CD8-positive, alpha-beta T cell (primary cell): ENCODE measurements at regions of chr14 and their contacts with region 1.

Region 1: DNA sequence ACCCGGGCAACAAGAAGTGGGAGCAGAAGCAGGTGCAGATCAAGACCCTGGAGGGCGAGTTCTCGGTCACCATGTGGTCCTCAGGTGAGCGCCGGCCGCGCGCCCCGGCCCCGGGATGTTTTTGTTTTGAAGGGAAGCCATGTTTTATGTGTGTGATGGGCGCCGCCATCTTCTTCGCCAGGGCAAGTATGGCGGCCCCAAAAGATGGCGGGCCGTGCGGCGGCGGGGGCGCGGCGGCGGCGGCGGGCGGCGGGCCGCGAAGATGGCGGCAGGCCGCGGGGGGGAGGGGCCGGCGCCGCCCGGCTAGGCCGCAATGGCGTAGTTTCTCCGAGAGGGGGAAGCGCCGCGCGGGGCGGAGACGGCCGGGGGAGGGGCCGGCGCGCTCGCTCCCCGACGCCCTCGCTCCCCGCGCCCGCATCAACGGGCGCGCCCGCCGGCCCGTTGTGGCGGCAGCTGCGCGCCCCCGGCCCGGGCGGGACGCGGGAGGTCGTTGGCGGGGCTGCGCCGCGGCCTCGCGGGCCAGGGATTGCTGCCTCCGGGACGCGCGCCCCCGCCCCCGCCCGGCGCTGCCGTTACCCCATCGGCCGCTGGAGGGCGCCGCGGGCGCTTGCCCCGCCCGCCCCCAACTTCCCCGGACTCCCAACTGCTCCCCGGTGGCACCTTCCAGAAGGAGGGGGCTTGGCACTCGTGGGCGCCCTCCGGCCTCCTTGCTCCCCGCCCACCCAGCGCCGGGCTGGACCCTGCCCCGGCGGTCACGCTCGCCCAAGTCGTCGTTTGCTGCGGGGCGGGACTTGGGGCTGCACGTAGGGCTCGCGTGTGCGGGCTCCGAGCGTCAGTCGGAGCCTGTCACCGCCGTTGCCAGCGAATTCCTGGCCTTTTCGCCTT is 1.1 kb downstream of the YY1 start:
- DNase-seq: peak; percentile 68 to 92 (median 84)
- ATAC-seq: peak; percentile 36
- H3K4me3 ChIP-seq: peak overlapping the region; percentile 66 to 77
- H3K4me3 Mint-ChIP-seq: peak overlapping the region; percentile 90
- H3K27ac ChIP-seq: peak overlapping the region; percentile 56 to 85
- H3K27ac Mint-ChIP-seq: peak overlapping the region; percentile 94
- H3K4me1 ChIP-seq: peaks cover 56% of the 10 kb centered on the region
- H3K4me1 Mint-ChIP-seq: peaks cover 59% of the 10 kb centered on the region
- H3K27me3 ChIP-seq: no peaks in the 10 kb centered on the region
- H3K27me3 Mint-ChIP-seq: no peaks in the 10 kb centered on the region
- CTCF ChIP-seq: peak; percentile 54

Region 2: GRCh38 chr14:99480917-99481744 is 759.0 kb before region 1 on chr14 and contains the start of gene CCNK:
- CTCF ChIA-PET with region 1: no interaction called
- POLR2A ChIA-PET with region 1: no interaction called
- intact Hi-C with region 1: loop called in 1 of 2 experiments (anchors 2 kb)
- DNase-seq: peak; percentile 100
- ATAC-seq: peak; percentile 87
- H3K4me3 ChIP-seq: peak within 1 kb of the TSS; percentile 97 to 99
- H3K4me3 Mint-ChIP-seq: peak within 1 kb of the TSS; percentile 99
- H3K27ac ChIP-seq: peak within 1 kb of the TSS; percentile 95 to 96
- H3K27ac Mint-ChIP-seq: peak within 1 kb of the TSS; percentile 99
- H3K4me1 ChIP-seq: peaks cover 38% of the 10 kb centered on the region
- H3K4me1 Mint-ChIP-seq: peaks cover 60% of the 10 kb centered on the region
- H3K27me3 ChIP-seq: no peaks in the 10 kb centered on the region
- H3K27me3 Mint-ChIP-seq: no peaks in the 10 kb centered on the region
- CTCF ChIP-seq: no peak
- total RNA-seq, gene CCNK: 171 to 177 TPM

Region 3: DNA sequence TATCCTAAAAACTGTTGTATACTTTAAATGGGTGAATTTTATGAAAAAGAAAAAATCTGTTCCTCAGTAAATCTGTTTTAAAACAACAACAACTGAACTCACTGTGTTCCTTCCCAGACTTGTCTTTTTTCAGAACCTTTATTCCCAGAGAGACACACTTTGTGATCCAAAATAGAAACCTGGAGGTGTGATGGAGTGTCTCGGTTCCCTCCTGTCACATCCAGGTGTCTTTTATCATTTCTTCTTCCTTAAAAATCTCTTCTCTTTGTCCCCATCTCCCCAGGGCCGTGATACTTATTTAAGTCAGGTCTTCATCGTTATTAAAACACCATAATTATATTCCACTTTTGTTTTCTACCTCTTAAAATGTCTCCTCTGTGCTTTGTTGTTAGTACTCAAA is 251.1 kb before region 1 on chr14:
- CTCF ChIA-PET with region 1: no interaction called
- POLR2A ChIA-PET with region 1: no interaction called
- intact Hi-C with region 1: no loop called
- DNase-seq: no peak
- ATAC-seq: no peak
- H3K4me3 ChIP-seq: no peak overlapping the region
- H3K4me3 Mint-ChIP-seq: no peak overlapping the region
- H3K27ac ChIP-seq: no peak overlapping the region
- H3K27ac Mint-ChIP-seq: no peak overlapping the region
- H3K4me1 ChIP-seq: no peaks in the 10 kb centered on the region
- H3K4me1 Mint-ChIP-seq: no peaks in the 10 kb centered on the region
- H3K27me3 ChIP-seq: no peaks in the 10 kb centered on the region
- H3K27me3 Mint-ChIP-seq: no peaks in the 10 kb centered on the region
- CTCF ChIP-seq: no peak

Region 4: DNA sequence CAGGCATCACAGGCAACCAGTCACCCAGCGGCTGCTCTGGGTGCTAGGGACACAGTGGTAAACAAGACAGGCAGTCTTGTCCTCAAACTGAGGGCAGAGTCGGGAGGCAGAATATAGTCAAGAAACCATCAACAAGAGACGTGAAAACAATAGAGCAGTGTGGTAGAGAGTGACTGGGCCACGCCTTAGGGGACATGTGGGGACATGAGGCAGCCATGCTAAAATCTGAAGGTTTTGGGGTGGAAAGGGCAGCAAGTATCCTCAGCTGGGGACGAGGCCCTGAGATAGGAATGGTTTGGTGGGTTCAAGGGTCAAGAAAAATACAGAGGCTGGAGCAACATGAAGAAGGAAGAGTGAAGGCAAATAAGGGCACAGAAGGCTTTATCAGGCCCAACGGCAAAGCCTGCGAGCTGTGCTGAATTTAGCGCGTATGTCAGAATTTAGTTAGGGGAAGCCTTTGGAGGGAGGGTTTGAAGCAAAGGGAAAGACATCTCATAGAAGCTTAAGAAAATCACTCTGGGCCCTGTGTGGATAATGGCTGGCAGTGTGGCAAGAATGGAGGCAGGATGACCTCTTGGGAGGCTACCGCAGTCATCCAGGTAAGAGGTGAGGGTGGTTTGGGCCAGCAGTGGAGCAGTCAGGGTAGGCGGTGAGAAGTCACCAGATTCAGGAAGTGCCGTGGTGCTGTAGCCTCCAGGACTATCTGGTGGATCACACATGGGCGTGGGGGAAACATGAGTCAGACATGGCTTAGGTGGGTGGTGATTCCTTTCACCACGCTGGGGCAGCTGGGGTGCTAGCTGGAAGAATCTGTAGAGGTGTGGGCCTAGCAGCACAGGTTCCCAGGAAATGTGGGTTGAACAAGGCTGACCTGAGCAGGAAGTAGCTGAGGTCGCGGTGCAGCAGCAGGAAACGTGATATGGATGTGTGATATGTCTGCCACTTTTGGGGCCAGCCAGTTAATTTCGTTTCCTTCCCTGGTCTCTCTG is 171.8 kb before region 1 on chr14:
- CTCF ChIA-PET with region 1: interaction called, 3 read pairs
- POLR2A ChIA-PET with region 1: interaction called, 5 read pairs
- intact Hi-C with region 1: loop called (anchors 2 kb)
- DNase-seq: peak; percentile 70 to 98 (median 88)
- ATAC-seq: peak; percentile 50
- H3K4me3 ChIP-seq: peak overlapping the region; percentile 73 to 85
- H3K4me3 Mint-ChIP-seq: peak overlapping the region; percentile 100
- H3K27ac ChIP-seq: peak overlapping the region; percentile 83 to 87
- H3K27ac Mint-ChIP-seq: peak overlapping the region; percentile 99
- H3K4me1 ChIP-seq: peaks cover 59% of the 10 kb centered on the region
- H3K4me1 Mint-ChIP-seq: peaks cover 82% of the 10 kb centered on the region
- H3K27me3 ChIP-seq: no peaks in the 10 kb centered on the region
- H3K27me3 Mint-ChIP-seq: no peaks in the 10 kb centered on the region
- CTCF ChIP-seq: no peak

Region 5: DNA sequence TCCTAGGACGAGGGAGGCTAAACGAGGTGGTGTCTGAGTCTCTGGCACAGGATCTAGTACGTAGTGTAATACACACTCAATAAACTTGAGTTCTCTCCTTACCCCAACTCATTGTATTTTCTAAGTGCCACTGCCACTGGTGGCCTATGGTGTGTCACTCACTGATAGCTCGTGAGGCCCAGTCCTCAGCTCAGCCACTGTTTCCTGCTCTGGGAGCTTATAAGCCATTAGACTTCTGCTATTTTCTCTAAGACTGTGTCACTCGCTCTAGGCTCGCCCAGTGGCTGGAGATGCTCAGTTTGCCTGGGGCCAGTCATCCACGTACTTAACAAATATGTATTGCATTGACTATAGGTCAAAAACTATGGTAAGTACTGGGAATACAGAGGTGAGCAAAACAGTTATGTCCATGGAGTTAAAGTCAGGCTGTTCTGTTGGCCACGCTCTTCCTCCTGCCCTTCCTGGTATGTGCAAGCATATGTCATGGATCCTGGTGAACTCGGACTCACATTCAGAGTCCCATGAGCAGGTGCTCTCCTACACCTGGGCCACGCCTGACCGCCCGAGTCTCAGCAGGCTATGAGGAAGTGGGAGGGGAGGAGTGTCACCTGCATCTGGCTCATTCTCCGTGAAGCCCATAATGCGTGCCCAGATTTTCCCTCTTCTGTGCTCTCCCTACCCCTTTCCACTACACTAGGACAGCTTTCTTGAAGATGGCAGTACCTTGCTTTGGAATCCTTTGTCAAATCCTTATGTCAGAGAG is 122.3 kb before region 1 on chr14:
- CTCF ChIA-PET with region 1: no interaction called
- POLR2A ChIA-PET with region 1: no interaction called
- intact Hi-C with region 1: no loop called
- DNase-seq: peak in 1 of 9 experiments; percentile 11
- ATAC-seq: no peak
- H3K4me3 ChIP-seq: no peak overlapping the region
- H3K4me3 Mint-ChIP-seq: no peak overlapping the region
- H3K27ac ChIP-seq: no peak overlapping the region
- H3K27ac Mint-ChIP-seq: peak overlapping the region; percentile 77
- H3K4me1 ChIP-seq: peaks cover 18% of the 10 kb centered on the region
- H3K4me1 Mint-ChIP-seq: peaks cover 37% of the 10 kb centered on the region
- H3K27me3 ChIP-seq: no peaks in the 10 kb centered on the region
- H3K27me3 Mint-ChIP-seq: no peaks in the 10 kb centered on the region
- CTCF ChIP-seq: no peak

Region 6: DNA sequence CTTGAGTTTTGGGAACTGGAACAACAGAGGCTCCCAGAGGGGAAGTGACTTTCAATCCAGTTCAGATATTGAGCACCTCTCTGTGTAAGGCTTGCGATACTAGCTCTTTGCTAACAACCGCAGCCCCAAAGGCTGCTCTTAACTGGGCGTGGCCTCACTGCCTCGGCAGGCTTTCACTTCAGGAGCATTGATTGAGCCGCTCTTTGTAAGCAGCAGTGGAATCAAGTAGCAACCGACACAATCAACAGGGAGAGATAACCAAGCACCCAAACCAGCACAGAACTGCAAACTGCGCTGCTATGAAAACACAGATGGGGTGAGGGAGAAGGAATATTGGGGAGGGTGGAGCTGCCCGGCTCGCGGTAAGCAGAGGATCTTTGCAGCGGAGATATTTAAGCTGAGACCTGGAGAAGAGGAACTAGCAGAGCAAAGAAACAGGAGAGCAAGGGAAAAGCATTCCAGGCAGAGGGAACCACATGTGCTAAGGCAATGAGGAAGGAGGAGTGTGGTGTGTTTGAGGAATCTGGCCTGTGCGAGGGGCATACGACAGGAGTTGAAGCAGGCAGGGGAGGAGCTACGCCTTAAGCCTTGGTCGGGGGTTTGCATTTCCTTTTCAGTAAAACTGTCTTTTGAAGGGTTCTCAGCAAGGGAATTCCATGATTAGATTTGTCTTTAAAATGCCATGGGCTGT is 18.4 kb before region 1 on chr14:
- CTCF ChIA-PET with region 1: interaction called, 52 read pairs
- POLR2A ChIA-PET with region 1: interaction called, 81 read pairs
- intact Hi-C with region 1: loop called (anchors 1 kb)
- DNase-seq: peak; percentile 40 to 85 (median 74)
- ATAC-seq: peak; percentile 96
- H3K4me3 ChIP-seq: peak overlapping the region; percentile 68 to 95
- H3K4me3 Mint-ChIP-seq: no peak overlapping the region
- H3K27ac ChIP-seq: peak overlapping the region; percentile 76 to 77
- H3K27ac Mint-ChIP-seq: no peak overlapping the region
- H3K4me1 ChIP-seq: peaks cover 45% of the 10 kb centered on the region
- H3K4me1 Mint-ChIP-seq: peaks cover 7% of the 10 kb centered on the region
- H3K27me3 ChIP-seq: no peaks in the 10 kb centered on the region
- H3K27me3 Mint-ChIP-seq: no peaks in the 10 kb centered on the region
- CTCF ChIP-seq: no peak

Region 7: DNA sequence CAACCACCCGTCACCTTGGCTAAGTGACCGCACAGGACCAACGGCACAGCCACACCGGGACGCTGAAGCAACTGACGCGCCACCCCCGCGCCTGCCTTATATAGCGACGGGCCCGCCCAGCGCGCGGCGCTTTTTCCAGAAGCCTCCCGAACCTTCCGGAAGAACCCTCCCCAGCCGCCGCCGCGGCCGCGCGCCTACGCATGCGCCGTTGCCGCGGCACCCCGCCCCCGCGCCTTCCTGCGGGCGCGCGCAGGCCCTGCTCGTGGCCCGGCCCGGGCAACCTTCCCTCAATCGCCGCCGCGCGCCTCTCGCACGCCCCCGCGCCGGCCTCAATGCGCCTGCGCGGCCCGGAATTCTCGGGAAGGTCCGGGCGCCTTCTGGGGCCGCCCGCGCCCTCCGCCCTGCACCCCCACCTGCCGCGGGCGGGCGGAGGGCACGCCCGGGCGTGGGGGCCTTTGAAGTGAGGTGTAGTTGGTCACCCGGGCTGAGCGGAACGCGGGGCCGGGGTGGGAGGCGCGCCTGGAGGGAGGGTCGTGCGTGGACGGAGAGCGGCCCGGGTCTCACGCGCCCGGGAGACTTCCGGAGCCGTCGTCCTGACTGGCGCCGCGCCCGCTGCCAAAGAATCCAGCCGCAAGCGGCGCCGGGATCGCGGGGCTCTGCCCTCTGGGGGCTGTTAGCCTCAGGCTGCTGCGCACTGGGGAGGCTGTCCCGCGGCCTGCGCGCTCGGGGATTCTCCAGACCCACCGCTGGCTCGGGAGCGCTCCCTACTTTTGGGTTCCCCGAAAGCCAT is 1847.1 kb after region 1 on chr14 and contains the start of gene HSP90AA1:
- CTCF ChIA-PET with region 1: no interaction called
- POLR2A ChIA-PET with region 1: no interaction called
- intact Hi-C with region 1: loop called in 1 of 2 experiments (anchors 10 kb)
- DNase-seq: peak; percentile 88 to 98 (median 95)
- ATAC-seq: peak; percentile 74
- H3K4me3 ChIP-seq: peak within 1 kb of the TSS; percentile 75 to 78
- H3K4me3 Mint-ChIP-seq: peak within 1 kb of the TSS; percentile 97
- H3K27ac ChIP-seq: peak within 1 kb of the TSS; percentile 96 to 97
- H3K27ac Mint-ChIP-seq: peak within 1 kb of the TSS; percentile 99
- H3K4me1 ChIP-seq: peaks cover 49% of the 10 kb centered on the region
- H3K4me1 Mint-ChIP-seq: peaks cover 58% of the 10 kb centered on the region
- H3K27me3 ChIP-seq: no peaks in the 10 kb centered on the region
- H3K27me3 Mint-ChIP-seq: no peaks in the 10 kb centered on the region
- CTCF ChIP-seq: no peak
- total RNA-seq, gene HSP90AA1: 532 to 539 TPM